HepG2 (cell line): ENCODE measurements at regions of chr2 and their contacts with region 1.

Region 1: DNA sequence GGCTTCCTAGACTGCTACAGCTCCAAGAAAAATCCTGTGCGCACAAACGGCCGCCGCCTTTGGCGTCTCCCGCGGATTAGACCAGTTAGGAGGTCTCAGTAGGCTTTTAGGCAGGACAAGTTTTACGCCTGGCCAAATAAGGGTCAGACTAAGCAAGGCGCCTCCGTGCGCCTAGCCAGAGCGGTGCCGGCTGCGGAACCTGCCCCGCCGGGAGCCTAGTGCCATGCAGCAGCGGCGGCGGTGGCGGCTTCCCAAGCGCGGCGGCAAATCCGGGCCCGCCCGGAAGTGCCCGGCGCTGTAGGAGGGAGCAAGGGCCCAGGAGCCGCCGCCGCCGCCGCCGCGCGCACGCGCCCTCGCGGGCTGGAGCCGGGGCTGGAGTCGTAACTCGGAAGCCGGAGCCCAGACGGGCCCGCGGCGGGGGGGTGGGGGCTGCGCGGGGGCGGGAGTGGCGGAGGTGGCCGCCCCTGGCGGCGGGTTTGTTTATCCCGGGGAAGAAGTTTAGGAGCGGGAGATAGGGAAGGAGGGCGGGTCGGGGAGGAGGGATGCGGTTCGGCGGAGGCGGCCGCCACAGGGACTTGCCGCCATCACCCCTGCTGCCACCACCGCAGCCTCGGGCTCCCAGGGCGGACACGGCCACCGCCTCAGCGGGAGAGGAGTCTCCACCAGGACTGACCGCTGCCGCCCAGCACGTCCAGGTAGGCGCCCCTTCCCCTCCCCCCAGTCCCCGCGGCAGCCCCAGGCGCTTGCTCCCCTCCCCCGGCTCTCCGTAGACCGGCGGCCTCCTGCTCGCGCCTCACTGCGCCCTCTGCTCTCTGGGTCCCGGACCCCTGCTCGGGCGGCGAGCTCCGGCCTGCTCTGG is at the start of gene SPOPL:
- DNase-seq: peak; percentile 87
- ATAC-seq: peak; percentile 92
- H3K4me3 ChIP-seq: peak within 1 kb of the TSS; percentile 78 to 94 (median 93)
- H3K27ac ChIP-seq: peak within 1 kb of the TSS; percentile 96
- H3K4me1 ChIP-seq: peaks cover 56% of the 10 kb centered on the region
- H3K27me3 ChIP-seq: no peaks in the 10 kb centered on the region; a peak in 1 of 5 replicates
- CTCF ChIP-seq: peak; percentile 38; the same call in 1 of the 2 replicates
- EP300 ChIP-seq: 0 out of 4 replicates have a peak, but pooled peaks of 1 of the 2 experiments have one; percentile 29
- POLR2A ChIP-seq: peak; percentile 85 to 93
- RAD21 ChIP-seq: peak; percentile 81
- total RNA-seq, gene SPOPL: 51.6 and 68.8 TPM in 2 replicates

Region 2: GRCh38 chr2:137910641-137911040 is 591.0 kb before region 1 on chr2:
- CTCF ChIA-PET with region 1: no interaction called
- POLR2A ChIA-PET with region 1: no interaction called
- in situ Hi-C with region 1: no loop called
- intact Hi-C with region 1: loop called (anchors 5 kb)
- DNase-seq: peak; percentile 55
- ATAC-seq: no peak
- H3K4me3 ChIP-seq: no peak overlapping the region
- H3K27ac ChIP-seq: no peak overlapping the region
- H3K4me1 ChIP-seq: peaks cover 42% of the 10 kb centered on the region
- H3K27me3 ChIP-seq: no peaks in the 10 kb centered on the region
- CTCF ChIP-seq: peak; percentile 66
- EP300 ChIP-seq: peak in 1 of 2 experiments; percentile 30; a peak in 1 of 4 replicates
- POLR2A ChIP-seq: no peak
- RAD21 ChIP-seq: peak; percentile 84

Region 3: DNA sequence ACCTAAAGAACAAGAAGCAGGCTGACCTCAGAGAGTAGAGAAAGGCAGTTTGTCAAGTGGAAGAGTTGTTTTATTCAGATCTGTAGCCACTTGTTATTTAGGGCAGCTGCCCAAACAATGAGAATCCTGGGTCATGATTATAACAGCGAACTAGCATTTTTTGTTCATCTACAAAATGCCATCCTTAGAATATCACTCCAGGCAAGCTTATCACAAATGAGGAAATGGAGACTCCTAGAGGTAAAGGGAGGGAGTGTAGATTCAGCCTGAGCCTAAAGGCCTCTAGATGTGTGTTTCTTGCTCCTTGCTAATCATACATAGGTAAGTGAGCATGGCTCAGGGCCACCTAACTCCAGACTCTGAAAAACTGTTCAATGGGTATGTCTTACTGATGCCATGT is 411.3 kb before region 1 on chr2:
- CTCF ChIA-PET with region 1: no interaction called
- POLR2A ChIA-PET with region 1: no interaction called
- in situ Hi-C with region 1: no loop called
- intact Hi-C with region 1: no loop called
- DNase-seq: peak; percentile 64
- ATAC-seq: peak; percentile 97
- H3K4me3 ChIP-seq: no peak overlapping the region
- H3K27ac ChIP-seq: no peak overlapping the region
- H3K4me1 ChIP-seq: peaks cover 8% of the 10 kb centered on the region
- H3K27me3 ChIP-seq: no peaks in the 10 kb centered on the region
- CTCF ChIP-seq: peak; percentile 79
- EP300 ChIP-seq: no peak
- POLR2A ChIP-seq: no peak
- RAD21 ChIP-seq: peak; percentile 84

Region 4: GRCh38 chr2:138275881-138276280 is 225.8 kb before region 1 on chr2:
- CTCF ChIA-PET with region 1: no interaction called
- POLR2A ChIA-PET with region 1: no interaction called
- in situ Hi-C with region 1: no loop called
- intact Hi-C with region 1: loop called (anchors 10 kb)
- DNase-seq: peak; percentile 88
- ATAC-seq: peak; percentile 87
- H3K4me3 ChIP-seq: peak overlapping the region in 2 of 3 experiments; percentile 23 to 43; a peak in 3 of 6 replicates
- H3K27ac ChIP-seq: peak overlapping the region; percentile 53
- H3K4me1 ChIP-seq: peaks cover 70% of the 10 kb centered on the region
- H3K27me3 ChIP-seq: no peaks in the 10 kb centered on the region
- CTCF ChIP-seq: no peak
- EP300 ChIP-seq: peak in 1 of 2 experiments; percentile 67; a peak in 2 of 4 replicates
- POLR2A ChIP-seq: no peak
- RAD21 ChIP-seq: no peak

Region 5: GRCh38 chr2:138475277-138475776 is 26.3 kb before region 1 on chr2:
- CTCF ChIA-PET with region 1: no interaction called
- POLR2A ChIA-PET with region 1: interaction called, 5 read pairs
- in situ Hi-C with region 1: no loop called
- intact Hi-C with region 1: loop called (anchors 2 kb)
- DNase-seq: peak; percentile 77
- ATAC-seq: peak; percentile 85
- H3K4me3 ChIP-seq: no peak overlapping the region
- H3K27ac ChIP-seq: peak overlapping the region; percentile 10
- H3K4me1 ChIP-seq: peaks cover 23% of the 10 kb centered on the region
- H3K27me3 ChIP-seq: no peaks in the 10 kb centered on the region
- CTCF ChIP-seq: no peak
- EP300 ChIP-seq: peak in 1 of 2 experiments; percentile 63; a peak in 1 of 4 replicates
- POLR2A ChIP-seq: no peak
- RAD21 ChIP-seq: no peak

Region 6: GRCh38 chr2:138559641-138560040 is 58.0 kb after region 1 on chr2:
- CTCF ChIA-PET with region 1: no interaction called
- POLR2A ChIA-PET with region 1: no interaction called
- in situ Hi-C with region 1: no loop called
- intact Hi-C with region 1: loop called (anchors 2 kb)
- DNase-seq: no peak
- ATAC-seq: no peak
- H3K4me3 ChIP-seq: no peak overlapping the region
- H3K27ac ChIP-seq: no peak overlapping the region
- H3K4me1 ChIP-seq: peaks cover 7% of the 10 kb centered on the region; the same call in 1 of the 2 replicates
- H3K27me3 ChIP-seq: no peaks in the 10 kb centered on the region
- CTCF ChIP-seq: no peak
- EP300 ChIP-seq: no peak
- POLR2A ChIP-seq: no peak
- RAD21 ChIP-seq: no peak